Panc1 (cell line): ENCODE measurements at regions of chr19 and their contacts with region 1.

Region 1: GRCh38 chr19:11763117-11763516 is 3.7 kb upstream of the ZNF441 start:
- DNase-seq: no peak
- ATAC-seq: no peak
- H3K4me3 ChIP-seq: no peak overlapping the region
- H3K27ac ChIP-seq: no peak overlapping the region
- H3K4me1 ChIP-seq: no peaks in the 10 kb centered on the region
- H3K27me3 ChIP-seq: no peaks in the 10 kb centered on the region
- CTCF ChIP-seq: no peak

Region 2: GRCh38 chr19:11832253-11832912 is 69.3 kb after region 1 on chr19:
- CTCF ChIA-PET with region 1: no interaction called
- POLR2A ChIA-PET with region 1: no interaction called
- in situ Hi-C with region 1: no loop called
- intact Hi-C with region 1: no loop called
- DNase-seq: no peak
- ATAC-seq: no peak
- H3K4me3 ChIP-seq: no peak overlapping the region
- H3K27ac ChIP-seq: no peak overlapping the region
- H3K4me1 ChIP-seq: no peaks in the 10 kb centered on the region
- H3K27me3 ChIP-seq: no peaks in the 10 kb centered on the region
- CTCF ChIP-seq: no peak

Region 3: DNA sequence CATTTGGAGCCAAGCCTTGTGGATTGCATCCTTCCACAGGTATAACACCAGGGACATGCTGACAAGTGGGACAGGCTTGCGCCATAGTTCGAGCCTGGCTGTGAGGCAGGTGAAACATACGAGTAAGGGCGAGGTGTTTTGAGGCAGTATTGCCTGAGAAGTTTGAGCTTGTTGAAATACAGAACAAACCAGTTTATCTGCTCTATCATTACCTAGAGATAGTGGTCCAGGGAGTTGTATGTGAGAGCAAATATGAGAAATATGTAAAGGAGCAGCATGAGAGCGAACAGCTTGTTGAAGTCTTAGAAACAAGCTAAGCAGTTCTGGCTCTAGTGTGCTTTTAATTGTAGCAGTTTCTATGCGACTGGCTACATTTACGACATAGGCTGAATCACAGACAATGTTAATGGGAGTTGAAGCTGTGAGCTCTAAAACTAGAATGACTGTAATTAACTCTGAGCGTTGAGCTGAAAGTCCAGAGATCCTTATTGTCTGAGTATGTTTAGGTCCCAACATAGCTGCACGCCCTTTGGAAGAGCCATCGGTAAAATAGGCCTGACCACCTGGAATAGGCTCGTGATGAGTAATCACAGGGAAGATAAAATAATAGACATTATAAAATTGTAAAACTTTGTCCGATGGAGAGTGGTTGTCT is 93.6 kb after region 1 on chr19:
- CTCF ChIA-PET with region 1: interaction called, 10 read pairs
- POLR2A ChIA-PET with region 1: no interaction called
- in situ Hi-C with region 1: no loop called
- intact Hi-C with region 1: no loop called
- DNase-seq: no peak
- ATAC-seq: no peak
- H3K4me3 ChIP-seq: no peak overlapping the region
- H3K27ac ChIP-seq: no peak overlapping the region
- H3K4me1 ChIP-seq: no peaks in the 10 kb centered on the region
- H3K27me3 ChIP-seq: no peaks in the 10 kb centered on the region
- CTCF ChIP-seq: no peak

Region 4: GRCh38 chr19:12052497-12053169 is 289.5 kb after region 1 on chr19 and contains the start of gene ZNF878:
- CTCF ChIA-PET with region 1: no interaction called
- POLR2A ChIA-PET with region 1: no interaction called
- in situ Hi-C with region 1: no loop called
- intact Hi-C with region 1: no loop called
- DNase-seq: no peak
- ATAC-seq: peak; percentile 100
- H3K4me3 ChIP-seq: peak within 1 kb of the TSS; percentile 70 to 83
- H3K27ac ChIP-seq: peak within 1 kb of the TSS; percentile 78
- H3K4me1 ChIP-seq: peaks cover 3% of the 10 kb centered on the region; the same call in 1 of the 2 replicates
- H3K27me3 ChIP-seq: no peaks in the 10 kb centered on the region
- CTCF ChIP-seq: peak; percentile 38; the same call in 1 of the 2 replicates
- total RNA-seq, gene ZNF878: 2.1 TPM